CD14-positive monocyte (primary cell): ENCODE measurements at regions of chr1 and their contacts with region 1.

Region 1: GRCh38 chr1:35577071-35577998 is 4.2 kb downstream of the TFAP2E start:
- DNase-seq: peak; percentile 42 to 64 (median 49)
- H3K4me3 ChIP-seq: peak overlapping the region; percentile 84 to 97 (median 91)
- H3K4me3 Mint-ChIP-seq: peak overlapping the region; percentile 99 to 100
- H3K27ac ChIP-seq: peak overlapping the region; percentile 48 to 83
- H3K27ac Mint-ChIP-seq: peak overlapping the region in 6 of 7 donors; percentile 63 to 85 (median 84)
- H3K4me1 ChIP-seq: peaks cover 48 to 58% of the 10 kb centered on the region in 2 donors
- H3K4me1 Mint-ChIP-seq: peaks cover 45% of the 10 kb centered on the region
- H3K27me3 ChIP-seq: peaks cover 5 to 26% of the 10 kb centered on the region in 2 donors
- H3K27me3 Mint-ChIP-seq: peaks cover 23 to 37% (median 32%) of the 10 kb centered on the region in 3 donors
- CTCF ChIP-seq: no peak

Region 2: DNA sequence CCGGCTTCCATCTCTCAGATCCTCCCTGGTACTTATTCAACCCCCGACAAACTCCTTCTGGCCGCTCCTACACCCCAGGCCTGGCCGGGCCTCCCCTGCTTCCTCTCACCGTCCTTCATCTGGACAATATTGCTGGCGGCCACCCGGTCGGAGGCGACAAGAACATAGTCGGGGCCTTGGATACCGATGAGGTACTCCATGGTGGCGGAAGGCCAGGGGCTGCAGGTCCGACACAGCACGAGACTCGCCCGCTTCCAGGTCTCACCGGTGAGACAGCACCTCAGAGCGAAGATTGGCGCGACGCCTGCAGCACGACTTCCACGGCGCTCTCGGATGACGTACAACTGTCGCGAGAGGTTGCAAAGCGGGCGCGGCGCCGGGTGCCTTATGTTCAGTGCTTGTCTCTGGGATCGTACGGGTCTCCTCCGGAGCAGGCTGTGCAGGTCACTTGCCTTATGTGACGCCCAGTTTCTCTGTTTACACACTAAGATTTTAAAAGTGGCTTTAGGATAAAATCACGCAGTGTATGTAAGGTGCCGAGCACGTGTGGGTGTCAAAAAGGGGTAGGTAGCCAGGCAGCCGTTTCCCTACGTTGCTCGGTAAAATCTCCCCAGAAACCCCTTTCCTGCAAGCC is 64.0 kb after region 1 on chr1 and contains the start of gene PSMB2:
- intact Hi-C with region 1: loop called in 1 of 2 experiments (anchors 10 kb)
- DNase-seq: peak; percentile 90 to 93 (median 93)
- H3K4me3 ChIP-seq: peak within 1 kb of the TSS; percentile 67 to 98 (median 92)
- H3K4me3 Mint-ChIP-seq: peak within 1 kb of the TSS; percentile 99
- H3K27ac ChIP-seq: peak within 1 kb of the TSS; percentile 79 to 89
- H3K27ac Mint-ChIP-seq: peak within 1 kb of the TSS; percentile 93 to 99 (median 98)
- H3K4me1 ChIP-seq: peaks cover 25 to 35% of the 10 kb centered on the region in 2 donors
- H3K4me1 Mint-ChIP-seq: peaks cover 35% of the 10 kb centered on the region
- H3K27me3 ChIP-seq: peaks cover 11 to 15% of the 10 kb centered on the region in 2 donors
- H3K27me3 Mint-ChIP-seq: peaks cover 9 to 25% (median 12%) of the 10 kb centered on the region in 3 donors
- CTCF ChIP-seq: no peak
- polyA plus RNA-seq, gene PSMB2: 27.9 to 84.1 (median 78.6) TPM

Region 3: DNA sequence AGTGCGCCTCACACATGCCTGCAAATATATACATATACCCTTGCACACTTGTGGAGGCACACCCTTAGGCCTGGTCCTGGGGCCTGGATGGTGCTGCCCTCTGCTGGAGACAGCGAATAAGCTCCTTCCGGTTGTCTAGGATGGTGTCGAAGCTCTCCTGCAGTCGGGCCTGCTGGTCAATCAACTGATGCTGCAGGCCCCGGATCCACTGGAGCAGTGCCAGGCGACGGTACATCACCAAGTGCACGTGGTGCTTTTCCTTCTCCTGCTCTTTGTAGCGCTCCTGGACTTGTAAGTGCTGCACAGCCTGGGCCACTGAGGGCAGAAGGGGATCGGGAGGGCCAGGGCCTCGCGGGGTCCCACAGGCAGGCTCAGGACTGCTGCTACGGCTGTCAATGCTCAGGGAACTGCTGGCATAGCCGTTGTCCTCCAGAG is 138.2 kb after region 1 on chr1:
- intact Hi-C with region 1: loop called in 1 of 2 experiments (anchors 5 kb)
- DNase-seq: peak; percentile 59 to 68 (median 63)
- H3K4me3 ChIP-seq: no peak overlapping the region
- H3K4me3 Mint-ChIP-seq: peak overlapping the region in 1 of 2 donors; percentile 53
- H3K27ac ChIP-seq: no peak overlapping the region
- H3K27ac Mint-ChIP-seq: peak overlapping the region in 2 of 7 donors; percentile 41 to 46
- H3K4me1 ChIP-seq: peaks cover 19 to 32% of the 10 kb centered on the region in 2 donors
- H3K4me1 Mint-ChIP-seq: peaks cover 28% of the 10 kb centered on the region
- H3K27me3 ChIP-seq: no peaks in the 10 kb centered on the region
- H3K27me3 Mint-ChIP-seq: no peaks in the 10 kb centered on the region
- CTCF ChIP-seq: peak; percentile 89